Activated CD4-positive, alpha-beta T cell treated with anti-CD3 and anti-CD28 coated beads, Interleukin-2, amount 10 ng/mL, durations not matched to agents 24 days and 14 days (primary cell): ENCODE measurements at regions of chr7 and their contacts with region 1.

Region 1: DNA sequence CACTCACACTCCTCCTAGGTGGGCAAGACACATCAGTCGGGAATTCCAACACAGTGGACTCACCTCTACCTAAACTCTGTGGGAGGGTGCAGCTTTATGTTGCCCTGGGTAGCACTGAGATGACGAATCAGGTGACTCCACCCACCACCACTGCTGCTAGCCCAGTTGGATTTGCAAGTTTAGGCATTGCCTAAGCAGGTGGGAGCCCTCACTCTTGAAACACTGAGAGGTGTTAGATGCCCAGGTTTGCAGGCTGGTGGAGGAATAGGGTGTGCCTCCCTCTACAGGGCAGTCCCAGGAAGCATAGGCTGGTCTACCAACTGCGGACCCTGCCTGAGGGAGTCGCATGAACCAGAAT is 708.9 kb downstream of the POM121L12 start:
- DNase-seq: no peak
- H3K4me3 Mint-ChIP-seq: no peak overlapping the region
- H3K27ac Mint-ChIP-seq: no peak overlapping the region
- H3K4me1 Mint-ChIP-seq: no peaks in the 10 kb centered on the region
- H3K27me3 Mint-ChIP-seq: no peaks in the 10 kb centered on the region

Region 2: GRCh38 chr7:53350241-53350640 is 394.1 kb before region 1 on chr7:
- intact Hi-C with region 1: no loop called
- DNase-seq: no peak
- H3K4me3 Mint-ChIP-seq: no peak overlapping the region
- H3K27ac Mint-ChIP-seq: no peak overlapping the region
- H3K4me1 Mint-ChIP-seq: no peaks in the 10 kb centered on the region
- H3K27me3 Mint-ChIP-seq: no peaks in the 10 kb centered on the region

Region 3: GRCh38 chr7:53800746-53801145 is 56.4 kb after region 1 on chr7:
- intact Hi-C with region 1: loop called (anchors 10 kb)
- DNase-seq: no peak
- H3K4me3 Mint-ChIP-seq: no peak overlapping the region
- H3K27ac Mint-ChIP-seq: no peak overlapping the region
- H3K4me1 Mint-ChIP-seq: no peaks in the 10 kb centered on the region
- H3K27me3 Mint-ChIP-seq: no peaks in the 10 kb centered on the region